ENCODE measurements at regions of chr4 and their contacts with region 1.

Region 1: GRCh38 chr4:139167774-139168444 is 9.1 kb downstream of the ELF2 start:
- DNase-seq: peak; percentile 59 to 62
- ATAC-seq: peak; percentile 74 to 89
- H3K4me3 ChIP-seq: no peak overlapping the region
- H3K27ac ChIP-seq: no peak overlapping the region
- H3K4me1 ChIP-seq: peaks cover 25% of the 10 kb centered on the region
- CTCF ChIP-seq: peak; percentile 55
- EP300 ChIP-seq: no peak
- POLR2A ChIP-seq: no peak
- RAD21 ChIP-seq: peak; percentile 50 to 63

Region 2: GRCh38 chr4:138639018-138639741 is 528.7 kb before region 1 on chr4:
- CTCF ChIA-PET with region 1: no interaction called
- POLR2A ChIA-PET with region 1: no interaction called
- DNase-seq: no peak
- ATAC-seq: no peak
- H3K4me3 ChIP-seq: no peak overlapping the region
- H3K27ac ChIP-seq: no peak overlapping the region
- H3K4me1 ChIP-seq: no peaks in the 10 kb centered on the region
- CTCF ChIP-seq: no peak
- EP300 ChIP-seq: no peak
- POLR2A ChIP-seq: no peak
- RAD21 ChIP-seq: no peak

Region 3: GRCh38 chr4:138835832-138836533 is 331.9 kb before region 1 on chr4:
- CTCF ChIA-PET with region 1: no interaction called
- POLR2A ChIA-PET with region 1: no interaction called
- DNase-seq: peak in 1 of 2 experiments; percentile 3
- ATAC-seq: no peak
- H3K4me3 ChIP-seq: no peak overlapping the region
- H3K27ac ChIP-seq: no peak overlapping the region
- H3K4me1 ChIP-seq: no peaks in the 10 kb centered on the region
- CTCF ChIP-seq: no peak
- EP300 ChIP-seq: no peak
- POLR2A ChIP-seq: no peak
- RAD21 ChIP-seq: no peak

Region 4: GRCh38 chr4:139099366-139099982 is 68.4 kb before region 1 on chr4:
- CTCF ChIA-PET with region 1: interaction called, 39 read pairs
- POLR2A ChIA-PET with region 1: no interaction called
- DNase-seq: peak; percentile 47 to 81
- ATAC-seq: peak; percentile 68 to 88; a peak in 5 of 6 replicates
- H3K4me3 ChIP-seq: no peak overlapping the region
- H3K27ac ChIP-seq: no peak overlapping the region
- H3K4me1 ChIP-seq: no peaks in the 10 kb centered on the region
- CTCF ChIP-seq: peak; percentile 79
- EP300 ChIP-seq: no peak
- POLR2A ChIP-seq: no peak
- RAD21 ChIP-seq: peak; percentile 78 to 87

Region 5: DNA sequence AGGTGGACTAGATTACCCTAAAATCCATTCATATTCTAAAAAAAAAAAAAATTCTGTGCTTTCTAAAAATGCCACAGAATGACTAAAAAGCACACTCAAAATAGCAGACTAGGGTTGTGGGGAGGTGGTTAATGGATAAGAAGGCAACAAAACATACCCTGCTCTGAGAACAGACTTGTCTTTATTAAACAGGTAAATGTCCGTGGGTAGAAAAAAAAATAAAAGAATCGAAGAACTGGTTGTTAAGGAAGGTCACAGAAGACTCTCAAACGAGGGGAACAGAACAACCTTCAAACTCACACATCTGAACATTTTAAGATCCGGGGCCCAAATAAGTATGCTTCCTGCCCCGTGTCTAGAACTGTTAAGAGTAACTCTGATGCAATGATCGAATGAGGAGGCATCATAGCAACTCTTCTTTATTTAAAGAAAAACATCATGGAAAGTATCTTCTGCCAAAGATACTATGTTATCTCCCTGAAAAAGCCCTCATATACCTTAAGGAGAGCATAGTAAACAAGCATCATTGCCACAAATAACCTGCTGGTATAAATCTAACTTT is 59.3 kb before region 1 on chr4:
- CTCF ChIA-PET with region 1: interaction called, 10 read pairs
- POLR2A ChIA-PET with region 1: no interaction called
- DNase-seq: no peak
- ATAC-seq: no peak
- H3K4me3 ChIP-seq: no peak overlapping the region
- H3K27ac ChIP-seq: no peak overlapping the region
- H3K4me1 ChIP-seq: no peaks in the 10 kb centered on the region
- CTCF ChIP-seq: no peak
- EP300 ChIP-seq: no peak
- POLR2A ChIP-seq: no peak
- RAD21 ChIP-seq: no peak

Region 6: DNA sequence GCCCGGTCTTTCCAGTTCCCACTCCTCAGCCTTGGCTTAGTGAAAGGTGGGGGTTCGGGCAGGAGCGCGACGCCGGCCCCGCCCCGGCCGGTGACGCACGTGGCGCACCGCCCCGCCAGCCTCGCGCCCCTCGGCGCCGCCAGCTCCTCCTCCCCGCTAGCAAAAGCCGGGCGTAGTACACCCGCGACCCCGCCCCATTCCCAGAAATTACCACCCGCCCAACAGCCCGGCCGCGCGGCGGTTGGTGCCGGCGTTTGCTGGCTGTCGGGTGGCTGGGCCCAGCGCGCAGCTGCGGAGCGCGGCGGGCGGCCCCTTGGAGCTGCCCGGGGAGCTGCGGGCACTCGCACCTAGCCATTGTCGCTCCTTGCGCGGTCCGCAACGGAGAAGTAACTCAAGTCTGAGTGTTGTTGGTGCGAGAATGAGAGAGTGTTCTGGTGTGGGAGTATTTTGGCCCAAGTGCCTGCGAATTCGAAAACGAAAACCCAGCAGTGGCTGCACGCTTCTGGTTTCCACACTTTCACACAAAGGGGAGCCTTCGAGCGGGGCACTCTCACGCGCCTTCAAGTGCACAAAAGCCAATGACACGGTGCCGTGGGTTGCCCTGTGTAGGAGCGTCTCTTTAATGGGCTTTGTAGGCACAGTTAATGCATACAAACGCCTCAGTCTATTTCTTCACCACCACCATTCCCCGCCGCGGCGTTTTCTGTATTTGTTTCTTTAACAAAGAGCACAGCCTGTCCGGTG is 10.1 kb after region 1 on chr4:
- CTCF ChIA-PET with region 1: interaction called, 10 read pairs
- POLR2A ChIA-PET with region 1: interaction called, 10 read pairs
- DNase-seq: peak; percentile 58 to 90
- ATAC-seq: peak; percentile 70 to 84
- H3K4me3 ChIP-seq: peak overlapping the region; percentile 92
- H3K27ac ChIP-seq: peak overlapping the region; percentile 85 to 100
- H3K4me1 ChIP-seq: peaks cover 13% of the 10 kb centered on the region; the same call in 2 of the 3 replicates
- CTCF ChIP-seq: no peak
- EP300 ChIP-seq: no peak
- POLR2A ChIP-seq: peak; percentile 92
- RAD21 ChIP-seq: no peak

Region 7: GRCh38 chr4:139470997-139471665 is 303.2 kb after region 1 on chr4:
- CTCF ChIA-PET with region 1: no interaction called
- POLR2A ChIA-PET with region 1: no interaction called
- DNase-seq: no peak
- ATAC-seq: no peak
- H3K4me3 ChIP-seq: no peak overlapping the region
- H3K27ac ChIP-seq: no peak overlapping the region
- H3K4me1 ChIP-seq: no peaks in the 10 kb centered on the region
- CTCF ChIP-seq: no peak
- EP300 ChIP-seq: no peak
- POLR2A ChIP-seq: no peak
- RAD21 ChIP-seq: no peak